Heart right ventricle (tissue), 16 donors: ENCODE measurements at regions of chr12 and their contacts with region 1.

Region 1: DNA sequence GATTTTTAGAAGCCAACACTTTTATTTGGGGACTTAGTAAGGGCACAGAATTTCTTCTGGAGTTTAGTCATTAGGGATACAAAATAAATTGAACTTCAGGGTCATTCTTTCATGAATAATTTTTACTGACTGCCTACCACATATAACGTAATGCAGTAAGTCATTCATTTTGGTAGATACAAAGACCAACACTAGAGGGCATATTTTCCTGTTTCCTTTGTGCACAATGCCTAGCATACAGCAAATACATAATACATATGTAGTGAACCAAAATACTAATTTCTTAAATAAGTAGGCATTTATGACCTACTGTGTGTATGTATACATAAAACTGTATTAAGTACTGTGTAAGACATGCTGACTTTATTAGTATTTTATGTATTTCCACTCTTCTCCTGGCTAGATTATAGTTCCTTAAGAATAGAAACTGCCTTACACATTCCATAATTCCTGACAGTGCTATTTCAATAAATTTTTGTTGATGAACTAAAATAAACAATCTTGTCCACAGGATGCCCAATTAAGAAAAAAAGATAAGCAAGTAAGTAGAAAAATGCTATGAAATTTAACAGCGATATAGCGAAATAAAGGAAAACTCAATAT is 47.9 kb downstream of the PPP1R12A start:
- DNase-seq: no peak
- ATAC-seq: peak in 4 of 8 donors; percentile 54 to 77 (median 59)
- H3K4me3 ChIP-seq: no peak overlapping the region
- H3K27ac ChIP-seq: no peak overlapping the region
- H3K4me1 ChIP-seq: peaks cover 0 to 93% (median 74%) of the 10 kb centered on the region in 9 donors
- H3K27me3 ChIP-seq: no peaks in the 10 kb centered on the region
- CTCF ChIP-seq: peak in 8 of 9 donors; percentile 22 to 68 (median 60)

Region 2: GRCh38 chr12:79927772-79928474 is 40.9 kb after region 1 on chr12:
- intact Hi-C with region 1: loop called in 4 of 10 experiments (anchors 5 to 10 kb)
- DNase-seq: no peak
- ATAC-seq: peak in 3 of 8 donors; percentile 17 to 38 (median 28)
- H3K4me3 ChIP-seq: no peak overlapping the region
- H3K27ac ChIP-seq: peak overlapping the region in 1 of 10 donors; percentile 29
- H3K4me1 ChIP-seq: peaks cover 0 to 84% (median 61%) of the 10 kb centered on the region in 9 donors
- H3K27me3 ChIP-seq: no peaks in the 10 kb centered on the region
- CTCF ChIP-seq: no peak